GM12878 (cell line): ENCODE measurements at regions of chr10 and their contacts with region 1.

Region 1: GRCh38 chr10:8059959-8060703 is 5.6 kb downstream of the GATA3 start:
- DNase-seq: peak; percentile 55
- ATAC-seq: peak; percentile 52
- H3K4me3 ChIP-seq: peak overlapping the region; percentile 53
- H3K27ac ChIP-seq: peak overlapping the region; percentile 78
- H3K4me1 ChIP-seq: peaks cover 16% of the 10 kb centered on the region
- H3K27me3 ChIP-seq: no peaks in the 10 kb centered on the region
- CTCF ChIP-seq: no peak
- EP300 ChIP-seq: no peak
- POLR2A ChIP-seq: peak; percentile 36; the same call in 1 of the 2 replicates
- RAD21 ChIP-seq: no peak

Region 2: DNA sequence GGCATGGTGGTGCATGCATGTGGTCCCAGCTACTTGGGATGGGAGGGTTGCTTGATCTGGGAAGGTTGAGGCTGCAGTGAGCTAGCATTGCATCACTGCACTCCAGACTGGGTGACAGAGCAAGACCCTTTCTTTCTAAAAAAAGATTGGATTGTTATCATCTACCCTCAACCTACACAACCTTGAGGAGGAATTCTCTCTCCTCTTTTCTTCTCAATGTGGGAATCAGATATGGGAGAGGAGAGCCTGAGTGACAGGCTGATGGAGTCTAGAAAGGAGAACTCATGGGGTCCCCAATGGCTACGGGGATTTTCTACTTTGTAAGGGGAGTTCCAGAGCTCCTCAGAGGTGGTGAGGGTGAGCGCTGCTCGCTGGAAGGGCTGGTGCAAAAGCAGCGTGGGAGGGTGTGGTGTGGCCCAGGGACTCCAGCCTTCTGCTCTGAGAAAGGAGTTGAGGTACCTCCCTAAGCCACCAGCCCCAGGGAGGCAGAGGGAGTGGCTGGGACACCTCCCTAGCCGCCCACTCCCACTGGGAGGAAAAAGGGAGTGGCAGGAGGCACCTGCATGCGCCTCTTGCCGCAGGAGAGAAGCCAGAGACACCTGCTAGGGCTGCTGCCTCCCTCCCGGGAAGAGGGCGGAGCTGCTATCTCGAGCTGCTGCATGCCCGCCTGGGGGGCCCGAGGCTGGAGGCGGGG is 42.7 kb after region 1 on chr10:
- CTCF ChIA-PET with region 1: no interaction called
- POLR2A ChIA-PET with region 1: no interaction called
- RAD21 ChIA-PET with region 1: interaction called, 17 read pairs
- SMC1A ChIA-PET with region 1: interaction called, 3 read pairs
- in situ Hi-C with region 1: no loop called
- intact Hi-C with region 1: no loop called
- DNase-seq: no peak
- ATAC-seq: peak; percentile 91
- H3K4me3 ChIP-seq: no peak overlapping the region
- H3K27ac ChIP-seq: no peak overlapping the region
- H3K4me1 ChIP-seq: peaks cover 12% of the 10 kb centered on the region
- H3K27me3 ChIP-seq: no peaks in the 10 kb centered on the region; a peak in 1 of 4 replicates
- CTCF ChIP-seq: no peak
- EP300 ChIP-seq: no peak
- POLR2A ChIP-seq: no peak
- RAD21 ChIP-seq: no peak